Endothelial cell of umbilical vein (primary cell): ENCODE measurements at regions of chr2 and their contacts with region 1.

Region 1: DNA sequence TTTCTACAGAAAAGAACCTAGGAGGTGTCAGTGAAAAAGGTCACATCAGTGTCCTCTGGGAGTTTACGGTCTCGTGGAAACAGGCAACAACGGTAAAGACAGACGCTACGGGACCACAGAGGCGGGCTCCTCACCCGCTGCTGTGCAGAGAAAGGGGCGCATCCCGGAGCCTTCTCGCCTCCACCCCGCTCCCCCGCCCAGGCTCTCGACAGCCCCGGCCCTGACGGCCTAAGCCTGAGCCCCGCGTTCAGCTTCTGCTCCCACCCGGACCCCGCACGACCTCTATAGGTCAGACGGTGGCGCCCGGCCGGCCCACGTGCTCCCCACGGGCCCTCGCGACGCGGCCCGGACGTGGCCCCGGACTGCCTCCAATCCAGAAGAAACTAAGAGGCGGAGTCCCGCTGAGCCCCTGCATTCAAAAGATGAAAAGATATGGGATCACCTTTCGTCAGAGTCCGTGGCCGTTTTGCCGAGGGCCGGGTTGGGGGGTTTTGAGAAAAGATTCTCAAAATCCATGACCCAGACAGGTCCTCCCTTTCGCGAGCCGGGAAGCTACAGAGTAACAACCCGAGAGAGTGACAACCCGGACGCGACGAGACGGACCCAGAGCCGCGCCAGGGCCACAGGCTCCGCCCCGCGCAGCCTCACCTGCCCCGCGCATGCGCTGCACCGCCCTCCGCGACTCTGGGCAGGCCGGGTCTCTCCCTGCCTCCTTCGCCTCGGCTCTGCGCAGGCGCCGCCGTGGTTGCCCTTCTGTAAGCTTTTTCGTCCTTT is at the start of gene ZC3H8:
- DNase-seq: peak; percentile 89
- H3K4me3 ChIP-seq: peak within 1 kb of the TSS; percentile 49 to 89 (median 82)
- H3K27ac ChIP-seq: peak within 1 kb of the TSS; percentile 65
- H3K4me1 ChIP-seq: peaks cover 13% of the 10 kb centered on the region
- H3K27me3 ChIP-seq: no peaks in the 10 kb centered on the region
- CTCF ChIP-seq: no peak
- POLR2A ChIP-seq: peak; percentile 90
- total RNA-seq, gene ZC3H8: 7.1 and 7.8 TPM in 2 replicates

Region 2: DNA sequence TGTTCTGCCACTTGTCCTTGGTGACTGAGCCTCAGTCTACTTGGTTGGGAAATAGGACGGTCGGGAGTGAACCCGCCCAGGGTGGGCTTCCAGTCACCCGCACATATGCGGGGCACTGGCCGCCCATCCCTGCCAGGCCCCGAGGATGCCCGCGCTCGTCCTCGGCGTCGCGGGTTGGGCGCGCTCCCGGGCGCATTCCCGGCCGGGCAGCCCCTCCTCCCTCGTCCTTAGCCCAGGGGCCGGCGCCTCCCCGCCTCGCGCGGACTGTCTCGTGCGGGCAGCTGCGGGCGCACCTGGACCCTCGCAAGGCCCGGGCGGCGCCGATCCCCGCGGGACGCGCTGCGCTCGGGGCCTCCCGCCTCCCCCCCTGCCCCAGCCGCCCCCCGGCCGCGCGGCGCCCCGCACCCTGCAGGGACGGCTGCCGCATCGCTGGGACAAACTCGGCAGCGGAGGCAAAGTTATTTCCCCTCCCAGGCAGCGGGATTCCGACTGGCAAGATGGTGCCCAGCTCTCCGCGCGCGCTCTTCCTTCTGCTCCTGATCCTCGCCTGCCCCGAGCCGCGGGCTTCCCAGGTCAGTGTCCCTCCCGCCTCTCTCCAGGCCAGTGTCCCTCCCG is 116.4 kb before region 1 on chr2 and contains the start of gene FBLN7:
- CTCF ChIA-PET with region 1: no interaction called
- POLR2A ChIA-PET with region 1: no interaction called
- dilution Hi-C with region 1: no loop called
- intact Hi-C with region 1: loop called (anchors 5 kb)
- DNase-seq: no peak
- H3K4me3 ChIP-seq: peak within 1 kb of the TSS; percentile 32 to 56 (median 55)
- H3K27ac ChIP-seq: peak within 1 kb of the TSS; percentile 1
- H3K4me1 ChIP-seq: peaks cover 9% of the 10 kb centered on the region
- H3K27me3 ChIP-seq: no peaks in the 10 kb centered on the region
- CTCF ChIP-seq: no peak
- POLR2A ChIP-seq: no peak
- total RNA-seq, gene FBLN7: 2.1 and 3.3 TPM in 2 replicates

Region 3: DNA sequence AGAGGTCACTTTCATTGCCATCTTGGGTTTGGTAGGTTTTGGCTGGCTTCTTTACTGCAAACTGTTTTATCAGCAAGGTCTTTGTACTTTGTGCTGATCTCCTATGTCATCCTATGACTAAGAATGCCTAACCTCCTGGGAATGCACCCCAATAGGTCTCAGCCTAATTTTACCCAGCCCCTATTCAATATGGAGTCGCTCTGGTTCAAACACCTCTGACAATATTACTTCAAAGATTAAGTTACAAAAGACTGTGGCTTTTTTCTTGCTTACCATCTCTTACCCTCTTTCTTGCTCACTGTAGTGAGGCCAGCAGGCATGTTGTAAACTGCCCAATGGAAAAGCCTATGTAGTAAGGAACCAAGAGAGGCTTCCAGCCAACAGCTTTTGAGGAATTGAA is 196.7 kb after region 1 on chr2:
- CTCF ChIA-PET with region 1: no interaction called
- POLR2A ChIA-PET with region 1: no interaction called
- dilution Hi-C with region 1: no loop called
- intact Hi-C with region 1: no loop called
- DNase-seq: no peak
- H3K4me3 ChIP-seq: no peak overlapping the region
- H3K27ac ChIP-seq: no peak overlapping the region
- H3K4me1 ChIP-seq: no peaks in the 10 kb centered on the region
- H3K27me3 ChIP-seq: peaks cover 0 to 4% of the 10 kb centered on the region in 2 experiments
- CTCF ChIP-seq: no peak
- POLR2A ChIP-seq: no peak